Activated CD4-positive, alpha-beta T cell treated with anti-CD3 and anti-CD28 coated beads, Interleukin-2, amount 10 ng/mL, durations not matched to agents 24 days and 14 days (primary cell): ENCODE measurements at regions of chr1 and their contacts with region 1.

Region 1: DNA sequence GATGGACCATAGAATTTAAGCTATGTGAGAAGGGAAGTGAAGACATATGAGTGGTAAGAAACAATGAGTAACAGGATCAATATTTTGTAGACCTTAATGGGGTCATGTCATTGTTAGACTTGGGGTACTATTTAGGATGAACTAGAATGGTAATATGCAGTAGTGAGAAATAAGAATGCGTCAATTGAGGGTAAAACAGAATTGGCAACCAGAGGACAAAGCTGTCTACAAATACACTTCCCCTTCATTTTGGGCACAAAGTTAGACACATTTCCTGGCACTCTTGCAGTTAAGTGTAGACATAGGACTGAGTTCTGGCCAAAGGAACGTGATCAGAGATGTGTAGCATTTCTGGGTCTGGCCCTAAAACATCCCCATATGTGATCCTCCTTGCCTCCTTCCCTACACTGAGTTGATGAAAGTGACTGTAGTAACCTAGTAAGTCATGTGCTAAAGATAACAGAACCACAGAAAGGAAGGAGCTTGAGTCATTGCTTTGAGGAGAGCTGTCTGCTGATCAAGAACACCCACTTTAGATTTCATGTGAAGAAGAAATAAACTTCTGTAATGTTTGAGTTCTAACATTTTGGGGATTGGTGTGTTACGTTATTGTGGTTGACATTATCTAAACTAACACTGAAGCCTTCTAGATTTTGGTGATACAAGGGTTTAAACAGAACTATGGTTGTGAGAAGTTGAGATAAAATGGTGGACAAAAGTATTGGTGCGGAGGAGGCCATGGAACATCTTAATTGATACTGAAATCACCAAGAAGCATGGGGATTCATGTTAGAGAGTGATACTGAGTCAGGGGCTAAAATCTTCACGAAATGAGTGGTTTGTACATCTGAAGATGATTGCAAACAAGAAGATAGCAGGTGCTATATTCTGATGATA is 41.7 kb downstream of the CD55 start:
- DNase-seq: peak; percentile 79
- H3K4me3 Mint-ChIP-seq: no peak overlapping the region
- H3K27ac Mint-ChIP-seq: no peak overlapping the region
- H3K4me1 Mint-ChIP-seq: peaks cover 3% of the 10 kb centered on the region
- H3K27me3 Mint-ChIP-seq: no peaks in the 10 kb centered on the region

Region 2: GRCh38 chr1:207052911-207053769 is 310.1 kb before region 1 on chr1 and contains the start of gene PFKFB2:
- intact Hi-C with region 1: loop called (anchors 5 kb)
- DNase-seq: peak; percentile 98
- H3K4me3 Mint-ChIP-seq: peak within 1 kb of the TSS; percentile 100
- H3K27ac Mint-ChIP-seq: peak within 1 kb of the TSS; percentile 83
- H3K4me1 Mint-ChIP-seq: peaks cover 36% of the 10 kb centered on the region
- H3K27me3 Mint-ChIP-seq: peaks cover 7% of the 10 kb centered on the region
- total RNA-seq, gene PFKFB2: 2.6 and 3.5 TPM in 2 replicates

Region 3: DNA sequence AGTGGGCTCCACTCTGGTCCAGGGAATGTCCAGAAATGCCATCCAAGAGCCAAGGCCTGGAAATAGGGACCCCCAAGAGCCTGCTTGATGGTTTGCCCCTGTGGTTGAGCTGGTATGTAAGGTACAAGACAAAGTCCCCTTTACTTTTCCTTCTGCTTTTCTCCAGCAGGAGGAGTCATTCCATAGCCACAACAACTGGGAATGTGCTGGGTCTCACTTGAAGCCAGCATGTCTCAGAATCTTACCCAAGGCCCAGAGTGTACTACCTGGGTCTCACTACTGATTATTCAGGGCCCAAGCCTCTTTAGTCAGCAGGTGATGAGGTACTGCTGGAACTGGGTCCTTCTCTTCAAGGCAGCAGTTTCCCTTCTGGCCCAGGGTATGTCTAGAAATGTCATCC is 103.8 kb before region 1 on chr1:
- intact Hi-C with region 1: no loop called
- DNase-seq: no peak
- H3K4me3 Mint-ChIP-seq: no peak overlapping the region
- H3K27ac Mint-ChIP-seq: no peak overlapping the region
- H3K4me1 Mint-ChIP-seq: peaks cover 2% of the 10 kb centered on the region
- H3K27me3 Mint-ChIP-seq: no peaks in the 10 kb centered on the region

Region 4: DNA sequence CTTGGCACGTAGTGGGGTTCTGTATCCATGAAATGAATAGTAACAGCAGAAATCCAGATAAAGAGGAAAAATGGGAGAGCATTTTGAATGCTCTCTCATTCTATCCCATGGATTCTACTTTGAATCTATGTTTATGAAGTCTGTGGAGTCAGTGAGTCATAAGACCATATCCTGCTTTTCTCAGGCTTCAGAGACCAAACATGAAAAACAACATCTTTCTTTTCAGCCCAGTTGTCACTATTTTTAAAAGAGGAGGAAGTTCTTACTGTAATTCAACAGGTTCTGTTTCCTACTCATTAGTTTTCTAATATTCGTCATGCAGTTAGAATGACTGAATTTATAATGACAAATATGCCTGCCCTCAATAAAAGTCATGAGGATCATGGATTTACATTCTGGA is 81.2 kb before region 1 on chr1:
- intact Hi-C with region 1: loop called (anchors 5 kb)
- DNase-seq: no peak
- H3K4me3 Mint-ChIP-seq: peak overlapping the region; percentile 55
- H3K27ac Mint-ChIP-seq: peak overlapping the region; percentile 84
- H3K4me1 Mint-ChIP-seq: peaks cover 48% of the 10 kb centered on the region
- H3K27me3 Mint-ChIP-seq: peaks cover 1% of the 10 kb centered on the region

Region 5: DNA sequence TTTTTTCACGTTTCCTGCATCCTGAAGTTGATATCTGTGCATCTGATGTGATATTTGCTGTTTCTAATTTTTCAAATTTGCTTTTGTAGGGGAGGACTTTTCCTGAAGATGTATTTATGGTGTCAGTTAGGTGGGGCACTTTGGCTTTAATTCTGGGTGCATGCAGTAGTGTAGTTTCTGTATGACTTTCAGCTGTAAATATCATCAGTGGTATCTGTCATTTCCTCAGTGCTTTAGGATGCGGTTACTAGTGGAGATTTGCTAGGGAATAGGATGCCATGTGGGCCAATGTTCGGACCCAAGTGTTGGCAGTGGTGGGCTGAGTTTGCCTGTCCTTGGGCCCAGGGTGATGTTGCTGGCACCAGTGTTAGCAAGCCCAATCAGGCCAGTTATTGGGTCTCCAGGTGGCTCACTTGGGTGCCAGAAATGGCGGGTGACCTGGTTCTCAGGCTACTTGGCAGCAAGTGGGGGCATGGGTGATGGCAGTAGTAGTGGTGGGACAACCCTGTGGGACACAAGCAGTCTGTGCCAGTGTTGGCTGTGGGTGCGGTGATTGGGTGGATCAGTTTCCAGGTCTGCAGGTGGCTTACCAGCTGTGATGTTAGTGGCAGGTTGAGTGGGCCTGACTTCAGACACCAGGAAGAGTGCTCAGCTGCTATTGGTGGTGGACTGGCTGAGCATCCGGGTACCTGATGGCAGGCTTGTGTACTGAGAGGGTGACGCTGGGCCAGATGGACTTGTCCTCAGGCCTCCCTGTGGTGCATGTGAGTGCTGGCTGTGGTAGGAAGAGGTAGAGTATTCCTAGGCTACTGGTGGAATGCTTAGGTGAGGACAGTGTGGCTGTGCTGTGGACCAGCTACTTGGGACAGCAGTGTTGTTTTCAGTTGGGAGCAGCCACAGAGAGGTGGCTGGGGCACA is 17.3 kb before region 1 on chr1:
- intact Hi-C with region 1: loop called (anchors 2 kb)
- DNase-seq: peak; percentile 59
- H3K4me3 Mint-ChIP-seq: peak overlapping the region; percentile 62
- H3K27ac Mint-ChIP-seq: peak overlapping the region; percentile 71
- H3K4me1 Mint-ChIP-seq: peaks cover 75% of the 10 kb centered on the region
- H3K27me3 Mint-ChIP-seq: no peaks in the 10 kb centered on the region

Region 6: DNA sequence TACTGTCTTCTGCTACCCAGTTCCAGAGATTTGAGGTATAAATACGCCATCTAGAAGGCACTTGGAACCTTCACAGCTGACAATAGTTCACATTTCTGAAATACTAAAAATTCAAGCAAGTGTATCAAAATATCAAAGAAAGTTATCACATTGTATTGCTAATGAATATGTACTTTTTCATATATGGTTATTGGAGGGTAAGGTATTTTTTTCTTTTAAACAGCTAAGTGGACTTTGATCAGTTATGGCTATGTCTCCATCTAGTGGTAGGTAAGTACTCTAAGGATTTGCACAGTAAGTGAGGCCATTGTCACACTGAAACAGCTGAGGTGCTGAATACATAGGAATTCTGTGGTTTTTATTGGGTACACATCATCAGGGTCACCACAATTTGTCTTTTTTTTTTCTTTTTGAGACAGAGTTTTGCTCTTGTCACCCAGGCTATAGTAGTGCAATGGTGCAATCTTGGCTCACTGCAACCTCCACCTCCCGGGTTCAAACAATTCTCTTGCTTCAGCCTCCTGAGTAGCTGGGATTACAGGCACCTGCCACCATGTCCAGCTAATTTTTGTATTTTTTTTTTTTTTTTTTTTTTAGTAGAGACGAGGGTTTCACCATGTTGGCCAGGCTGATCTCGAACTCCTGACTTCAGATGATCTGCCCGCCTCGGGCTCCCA is 41.8 kb after region 1 on chr1:
- intact Hi-C with region 1: loop called (anchors 1 kb)
- DNase-seq: peak; percentile 69
- H3K4me3 Mint-ChIP-seq: no peak overlapping the region
- H3K27ac Mint-ChIP-seq: no peak overlapping the region
- H3K4me1 Mint-ChIP-seq: peaks cover 18% of the 10 kb centered on the region
- H3K27me3 Mint-ChIP-seq: no peaks in the 10 kb centered on the region

Region 7: DNA sequence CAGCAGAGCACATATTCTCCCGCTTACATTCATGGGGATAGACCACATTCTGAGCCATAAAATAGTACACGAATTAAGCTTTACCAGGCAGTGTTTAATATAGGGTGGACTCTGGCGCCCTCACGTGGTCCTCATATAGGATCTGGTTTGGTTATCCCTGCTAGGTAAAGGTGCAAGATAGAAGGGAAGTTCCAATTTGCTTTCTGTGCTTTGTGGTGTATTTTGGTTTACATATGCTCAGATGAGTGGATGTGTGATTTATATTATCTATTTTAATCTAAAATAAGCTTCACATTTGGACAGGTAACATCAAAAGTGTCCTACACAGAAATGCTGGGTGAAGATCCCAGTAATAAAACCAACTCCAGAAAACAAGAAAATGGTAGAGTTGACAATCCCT is 136.4 kb after region 1 on chr1:
- intact Hi-C with region 1: loop called (anchors 5 kb)
- DNase-seq: peak; percentile 87
- H3K4me3 Mint-ChIP-seq: no peak overlapping the region
- H3K27ac Mint-ChIP-seq: peak overlapping the region; percentile 39
- H3K4me1 Mint-ChIP-seq: peaks cover 13% of the 10 kb centered on the region
- H3K27me3 Mint-ChIP-seq: peaks cover 52% of the 10 kb centered on the region